ENCODE measurements at regions of chr1 and their contacts with region 1.

Region 1: DNA sequence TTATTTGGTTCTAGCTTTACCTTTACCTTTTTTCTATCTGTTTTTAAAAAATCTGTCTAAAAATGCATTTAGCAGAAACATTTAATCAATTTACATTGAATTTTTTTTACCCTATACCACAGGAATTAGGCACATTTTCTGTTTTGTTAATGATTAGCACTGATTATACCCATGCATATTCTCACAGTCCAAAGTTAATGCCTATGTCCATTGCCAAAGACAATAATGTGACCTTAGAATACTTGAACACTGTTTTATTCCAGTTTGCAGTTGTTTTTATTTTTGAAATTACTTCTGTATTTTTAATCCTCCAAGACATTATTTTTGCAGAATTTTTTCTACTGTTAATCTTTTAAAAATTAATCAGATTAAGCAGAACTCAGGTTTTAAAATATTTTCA is 11.0 kb upstream of the AMY2B start:
- DNase-seq: no peak
- ATAC-seq: no peak
- H3K4me3 ChIP-seq: no peak overlapping the region
- H3K27ac ChIP-seq: no peak overlapping the region
- H3K4me1 ChIP-seq: peaks cover 0 to 26% (median 11%) of the 10 kb centered on the region in 9 donors
- H3K27me3 ChIP-seq: no peaks in the 10 kb centered on the region
- CTCF ChIP-seq: no peak

Region 2: DNA sequence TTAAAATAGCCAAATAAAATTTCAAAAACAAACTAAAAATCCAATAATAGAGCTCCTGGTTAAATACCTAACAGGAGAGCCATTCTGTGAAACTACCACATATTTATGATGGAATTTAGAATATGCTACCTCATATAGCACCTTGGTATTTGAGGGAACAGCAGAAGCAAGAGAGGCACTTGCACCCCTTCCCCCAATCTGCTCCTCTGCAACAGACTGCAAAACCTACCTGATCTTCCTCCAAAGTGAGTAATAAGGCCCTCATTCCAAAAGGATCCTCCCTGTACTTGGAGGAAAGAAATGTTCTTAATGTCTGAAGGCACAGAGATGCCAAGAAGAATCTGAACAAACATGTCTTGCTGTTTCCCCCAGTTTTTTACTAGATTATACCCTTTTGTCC is 63.0 kb before region 1 on chr1:
- intact Hi-C with region 1: loop called in 1 of 10 experiments (anchors 2 kb)
- DNase-seq: no peak
- ATAC-seq: no peak
- H3K4me3 ChIP-seq: no peak overlapping the region
- H3K27ac ChIP-seq: no peak overlapping the region
- H3K4me1 ChIP-seq: no peaks in the 10 kb centered on the region
- H3K27me3 ChIP-seq: no peaks in the 10 kb centered on the region
- CTCF ChIP-seq: no peak

Region 3: DNA sequence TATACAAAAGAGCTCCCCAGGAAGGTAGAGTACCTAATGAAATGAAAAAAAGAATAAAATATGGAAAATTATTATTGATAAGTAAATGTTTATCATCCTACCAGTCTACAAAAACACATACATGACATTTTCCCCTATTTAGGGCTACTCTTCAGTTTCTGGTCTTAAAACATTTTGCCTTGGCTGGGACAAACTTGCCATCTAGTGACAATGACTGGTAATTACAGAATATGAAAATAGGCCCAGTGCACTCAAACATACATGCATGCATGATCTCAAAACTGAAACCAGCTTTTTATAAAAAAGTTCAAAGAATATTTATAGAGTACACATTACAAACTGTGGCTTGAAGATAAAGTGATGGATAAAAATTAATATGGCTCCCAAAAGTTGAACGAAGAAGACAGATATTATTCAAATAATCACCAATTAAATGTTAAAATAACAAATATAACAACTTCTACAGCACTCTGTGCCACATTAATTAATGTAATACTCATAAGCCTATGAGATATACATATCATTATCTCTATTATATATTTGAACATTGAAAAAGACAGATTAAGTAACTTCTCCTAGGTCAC is 45.4 kb before region 1 on chr1:
- intact Hi-C with region 1: no loop called
- DNase-seq: no peak
- ATAC-seq: peak in 1 of 8 donors; percentile 57
- H3K4me3 ChIP-seq: no peak overlapping the region
- H3K27ac ChIP-seq: no peak overlapping the region
- H3K4me1 ChIP-seq: no peaks in the 10 kb centered on the region
- H3K27me3 ChIP-seq: no peaks in the 10 kb centered on the region
- CTCF ChIP-seq: peak; percentile 40 to 82 (median 73)

Region 4: GRCh38 chr1:103547840-103548239 is 12.6 kb before region 1 on chr1:
- intact Hi-C with region 1: loop called in 1 of 10 experiments (anchors 1 kb)
- DNase-seq: no peak
- ATAC-seq: no peak
- H3K4me3 ChIP-seq: no peak overlapping the region
- H3K27ac ChIP-seq: no peak overlapping the region
- H3K4me1 ChIP-seq: no peaks in the 10 kb centered on the region
- H3K27me3 ChIP-seq: no peaks in the 10 kb centered on the region
- CTCF ChIP-seq: no peak